ENCODE measurements at regions of chr12 and their contacts with region 1.

Region 1: GRCh38 chr12:64890873-64891468 is 66.5 kb downstream of the TBC1D30 start:
- DNase-seq: peak in 2 of 9 experiments; percentile 60 to 69
- ATAC-seq: peak; percentile 48
- H3K4me3 ChIP-seq: no peak overlapping the region
- H3K4me3 Mint-ChIP-seq: no peak overlapping the region
- H3K27ac ChIP-seq: no peak overlapping the region
- H3K27ac Mint-ChIP-seq: no peak overlapping the region
- H3K4me1 ChIP-seq: no peaks in the 10 kb centered on the region
- H3K4me1 Mint-ChIP-seq: no peaks in the 10 kb centered on the region
- H3K27me3 ChIP-seq: no peaks in the 10 kb centered on the region
- H3K27me3 Mint-ChIP-seq: peaks cover 27% of the 10 kb centered on the region
- CTCF ChIP-seq: peak; percentile 90

Region 2: GRCh38 chr12:64696080-64696741 is 194.8 kb before region 1 on chr12:
- CTCF ChIA-PET with region 1: no interaction called
- POLR2A ChIA-PET with region 1: no interaction called
- intact Hi-C with region 1: no loop called
- DNase-seq: peak in 1 of 9 experiments; percentile 55
- ATAC-seq: no peak
- H3K4me3 ChIP-seq: no peak overlapping the region
- H3K4me3 Mint-ChIP-seq: peak overlapping the region; percentile 56
- H3K27ac ChIP-seq: peak overlapping the region in 1 of 2 experiments; percentile 36
- H3K27ac Mint-ChIP-seq: peak overlapping the region; percentile 91
- H3K4me1 ChIP-seq: peaks cover 79% of the 10 kb centered on the region
- H3K4me1 Mint-ChIP-seq: peaks cover 82% of the 10 kb centered on the region
- H3K27me3 ChIP-seq: no peaks in the 10 kb centered on the region
- H3K27me3 Mint-ChIP-seq: no peaks in the 10 kb centered on the region
- CTCF ChIP-seq: no peak

Region 3: GRCh38 chr12:64903479-64904152 is 12.6 kb after region 1 on chr12:
- CTCF ChIA-PET with region 1: interaction called, 10 read pairs
- POLR2A ChIA-PET with region 1: no interaction called
- intact Hi-C with region 1: no loop called
- DNase-seq: no peak
- ATAC-seq: no peak
- H3K4me3 ChIP-seq: no peak overlapping the region
- H3K4me3 Mint-ChIP-seq: no peak overlapping the region
- H3K27ac ChIP-seq: no peak overlapping the region
- H3K27ac Mint-ChIP-seq: no peak overlapping the region
- H3K4me1 ChIP-seq: no peaks in the 10 kb centered on the region
- H3K4me1 Mint-ChIP-seq: no peaks in the 10 kb centered on the region
- H3K27me3 ChIP-seq: no peaks in the 10 kb centered on the region
- H3K27me3 Mint-ChIP-seq: peaks cover 8% of the 10 kb centered on the region
- CTCF ChIP-seq: no peak

Region 4: GRCh38 chr12:65232476-65233077 is 341.6 kb after region 1 on chr12:
- CTCF ChIA-PET with region 1: interaction called, 50 read pairs
- POLR2A ChIA-PET with region 1: no interaction called
- intact Hi-C with region 1: loop called (anchors 1 kb)
- DNase-seq: peak in 2 of 9 experiments; percentile 28 to 53
- ATAC-seq: peak; percentile 40
- H3K4me3 ChIP-seq: no peak overlapping the region
- H3K4me3 Mint-ChIP-seq: peak overlapping the region; percentile 40
- H3K27ac ChIP-seq: no peak overlapping the region
- H3K27ac Mint-ChIP-seq: no peak overlapping the region
- H3K4me1 ChIP-seq: peaks cover 4% of the 10 kb centered on the region
- H3K4me1 Mint-ChIP-seq: peaks cover 13% of the 10 kb centered on the region
- H3K27me3 ChIP-seq: no peaks in the 10 kb centered on the region
- H3K27me3 Mint-ChIP-seq: no peaks in the 10 kb centered on the region
- CTCF ChIP-seq: peak; percentile 69

Region 5: GRCh38 chr12:66087365-66087943 is 1196.5 kb after region 1 on chr12:
- CTCF ChIA-PET with region 1: interaction called, 17 read pairs
- POLR2A ChIA-PET with region 1: no interaction called
- intact Hi-C with region 1: loop called in 1 of 2 experiments (anchors 1 kb)
- DNase-seq: peak; percentile 14 to 63 (median 46)
- ATAC-seq: no peak
- H3K4me3 ChIP-seq: no peak overlapping the region
- H3K4me3 Mint-ChIP-seq: no peak overlapping the region
- H3K27ac ChIP-seq: no peak overlapping the region
- H3K27ac Mint-ChIP-seq: no peak overlapping the region
- H3K4me1 ChIP-seq: no peaks in the 10 kb centered on the region
- H3K4me1 Mint-ChIP-seq: no peaks in the 10 kb centered on the region
- H3K27me3 ChIP-seq: no peaks in the 10 kb centered on the region
- H3K27me3 Mint-ChIP-seq: peaks cover 29% of the 10 kb centered on the region
- CTCF ChIP-seq: peak; percentile 53

Region 6: DNA sequence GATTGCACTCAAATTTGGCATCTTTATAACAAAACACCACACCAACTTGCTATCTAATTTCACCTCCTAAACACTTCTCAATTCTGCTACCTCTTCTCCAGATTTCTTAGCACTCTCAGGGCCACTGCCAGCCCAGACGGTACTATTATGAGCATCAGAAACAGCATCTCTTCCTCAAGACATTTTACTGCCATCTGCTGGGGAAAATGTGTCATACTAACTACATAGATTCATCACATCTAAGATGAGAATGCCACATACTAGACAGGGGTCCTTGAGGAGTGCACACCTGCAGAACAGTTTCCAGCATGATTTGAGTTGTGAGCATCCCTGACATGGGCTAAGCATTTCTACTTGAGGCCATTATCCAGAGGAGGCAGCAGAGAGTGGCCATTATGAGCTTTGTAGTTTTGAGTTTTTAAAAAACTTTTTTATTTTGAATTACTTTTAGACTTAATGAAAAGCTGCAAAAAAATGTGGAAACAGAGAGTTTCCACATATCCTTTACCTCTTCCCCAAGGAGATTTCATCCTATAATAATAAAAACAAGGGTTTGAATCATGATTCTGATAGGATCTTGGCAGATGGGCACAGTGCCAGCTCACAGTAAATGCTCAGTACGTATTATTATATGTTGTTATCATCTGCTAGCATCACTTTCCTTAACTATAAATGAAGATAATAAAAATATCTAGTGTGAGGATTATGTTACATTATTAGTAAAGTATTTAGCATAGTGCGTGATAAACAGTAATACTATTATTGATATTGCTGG is 1803.1 kb after region 1 on chr12:
- CTCF ChIA-PET with region 1: no interaction called
- POLR2A ChIA-PET with region 1: no interaction called
- intact Hi-C with region 1: loop called in 1 of 2 experiments (anchors 5 kb)
- DNase-seq: peak in 3 of 9 experiments; percentile 20 to 77 (median 64)
- ATAC-seq: peak; percentile 78
- H3K4me3 ChIP-seq: no peak overlapping the region
- H3K4me3 Mint-ChIP-seq: no peak overlapping the region
- H3K27ac ChIP-seq: no peak overlapping the region
- H3K27ac Mint-ChIP-seq: no peak overlapping the region
- H3K4me1 ChIP-seq: peaks cover 12% of the 10 kb centered on the region
- H3K4me1 Mint-ChIP-seq: peaks cover 23% of the 10 kb centered on the region
- H3K27me3 ChIP-seq: no peaks in the 10 kb centered on the region
- H3K27me3 Mint-ChIP-seq: no peaks in the 10 kb centered on the region
- CTCF ChIP-seq: peak; percentile 77

Measured in CD8-positive, alpha-beta T cell (primary cell).